ENCODE measurements at regions of chr17 and their contacts with region 1.

Region 1: GRCh38 chr17:40098846-40099618 is 1.4 kb downstream of the NR1D1 start:
- DNase-seq: peak; percentile 90 to 95 (median 94)
- H3K4me3 ChIP-seq: peak overlapping the region in 6 of 7 experiments; percentile 40 to 87 (median 72)
- H3K27ac ChIP-seq: peak overlapping the region; percentile 9 to 78
- H3K4me1 ChIP-seq: peaks cover 8 to 69% (median 58%) of the 10 kb centered on the region in 4 experiments
- H3K27me3 ChIP-seq: no peaks in the 10 kb centered on the region

Region 2: DNA sequence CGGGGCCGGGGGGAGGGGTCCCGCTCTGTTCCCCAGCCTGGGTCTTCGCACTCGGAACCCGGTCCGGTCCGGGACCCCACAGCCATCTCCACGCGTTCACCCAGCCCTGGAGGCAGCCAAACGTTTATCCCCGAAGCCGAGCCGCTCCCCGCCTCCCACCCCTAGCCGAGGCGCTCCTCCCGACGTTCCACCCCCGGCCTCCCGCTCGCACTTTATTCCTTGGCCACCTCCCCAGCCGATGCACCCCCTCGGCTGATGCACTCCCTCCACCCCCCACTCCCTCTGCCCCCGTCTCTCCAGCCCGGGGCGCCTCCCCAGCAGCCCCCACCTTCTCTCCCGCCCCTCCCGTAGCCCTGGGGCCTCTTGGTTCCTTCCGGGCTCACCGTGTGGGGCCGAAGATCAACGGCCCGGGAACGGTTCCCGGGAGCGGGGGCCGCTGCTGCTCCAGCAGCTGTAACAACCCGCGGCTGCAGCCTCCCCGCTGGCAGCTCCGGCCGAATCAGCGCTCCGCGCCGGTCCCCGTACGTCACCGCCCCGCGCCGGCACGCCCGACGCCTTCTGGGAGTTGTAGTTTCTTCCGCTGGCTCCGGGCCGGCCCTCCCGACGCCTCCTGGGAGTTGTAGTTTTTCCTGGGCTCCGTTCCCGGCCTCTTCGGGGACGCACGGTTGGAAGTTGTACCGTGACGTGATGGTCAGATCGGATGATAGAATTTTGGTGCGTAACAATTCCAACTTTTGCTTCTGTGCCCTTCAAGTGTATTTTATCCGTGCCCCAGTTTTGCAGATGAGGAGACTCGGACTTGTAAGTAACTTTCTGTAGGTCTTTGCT is 171.7 kb before region 1 on chr17 and contains the starts of genes LRRC3C and ORMDL3:
- CTCF ChIA-PET with region 1: no interaction called
- POLR2A ChIA-PET with region 1: no interaction called
- DNase-seq: peak; percentile 91 to 92 (median 92)
- H3K4me3 ChIP-seq: peak within 1 kb of the TSS; percentile 66 to 91 (median 76)
- H3K27ac ChIP-seq: peak within 1 kb of the TSS; percentile 43 to 73
- H3K4me1 ChIP-seq: peaks cover 4 to 52% (median 33%) of the 10 kb centered on the region in 4 experiments
- H3K27me3 ChIP-seq: no peaks in the 10 kb centered on the region

Region 3: GRCh38 chr17:40062329-40063186 is 36.5 kb before region 1 on chr17 and contains the start of gene THRA:
- CTCF ChIA-PET with region 1: interaction called, 10 read pairs
- POLR2A ChIA-PET with region 1: no interaction called
- DNase-seq: peak in 2 of 3 donors; percentile 72 to 79
- H3K4me3 ChIP-seq: peak within 1 kb of the TSS; percentile 71 to 96 (median 90)
- H3K27ac ChIP-seq: peak within 1 kb of the TSS in 1 of 2 experiments; percentile 69
- H3K4me1 ChIP-seq: peaks cover 8 to 40% (median 37%) of the 10 kb centered on the region in 4 experiments
- H3K27me3 ChIP-seq: peaks cover 0 to 5% (median 0%) of the 10 kb centered on the region in 5 experiments